A673 (cell line): ENCODE measurements at regions of chr16 and their contacts with region 1.

Region 1: DNA sequence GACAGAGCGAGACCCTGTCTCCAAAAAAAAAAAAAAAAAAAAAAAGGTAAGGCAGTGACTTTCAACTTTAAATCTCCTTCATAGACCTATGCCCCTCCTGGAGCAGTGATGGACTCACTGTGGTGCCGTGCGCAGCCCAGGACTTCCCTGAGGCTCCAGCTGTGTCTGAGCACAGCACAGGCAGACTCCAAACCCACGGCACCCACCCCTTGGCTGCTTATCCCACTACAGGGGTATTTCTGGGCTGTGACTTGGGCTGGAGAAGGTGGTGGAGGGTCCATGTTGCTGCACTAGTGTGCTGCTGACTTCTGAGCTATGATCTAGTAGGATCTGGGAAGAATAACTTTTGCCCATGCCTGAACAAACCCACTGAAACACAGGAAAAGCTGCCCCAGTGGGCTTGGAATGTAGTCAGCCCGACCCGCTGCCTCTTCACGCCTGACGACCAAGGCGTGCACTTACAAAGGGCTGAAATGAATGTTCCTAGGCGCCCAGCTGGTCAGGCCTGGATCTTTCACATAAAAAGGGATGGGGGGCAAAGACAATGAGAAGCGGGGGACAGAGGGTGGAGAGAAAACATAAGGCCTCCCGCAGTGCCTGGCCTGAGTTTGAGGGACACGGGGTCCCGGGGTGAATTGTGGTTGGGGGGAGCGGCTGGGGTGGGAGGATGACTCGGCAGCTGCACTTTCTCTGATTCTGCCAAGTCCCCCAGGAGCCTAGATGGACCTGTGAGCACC is 83.0 kb downstream of the IRF8 start:
- DNase-seq: no peak
- H3K4me3 ChIP-seq: no peak overlapping the region
- H3K27ac ChIP-seq: no peak overlapping the region
- H3K4me1 ChIP-seq: peaks cover 16% of the 10 kb centered on the region
- H3K27me3 ChIP-seq: peaks cover 7% of the 10 kb centered on the region
- CTCF ChIP-seq: no peak

Region 2: GRCh38 chr16:85715169-85716015 is 266.6 kb before region 1 on chr16:
- CTCF ChIA-PET with region 1: no interaction called
- POLR2A ChIA-PET with region 1: no interaction called
- intact Hi-C with region 1: no loop called
- DNase-seq: no peak
- H3K4me3 ChIP-seq: no peak overlapping the region
- H3K27ac ChIP-seq: peak overlapping the region; percentile 25
- H3K4me1 ChIP-seq: peaks cover 23% of the 10 kb centered on the region
- H3K27me3 ChIP-seq: no peaks in the 10 kb centered on the region
- CTCF ChIP-seq: no peak

Region 3: GRCh38 chr16:86285421-86285820 is 303.4 kb after region 1 on chr16:
- CTCF ChIA-PET with region 1: interaction called, 21 read pairs
- POLR2A ChIA-PET with region 1: no interaction called
- intact Hi-C with region 1: no loop called
- DNase-seq: no peak
- H3K4me3 ChIP-seq: no peak overlapping the region
- H3K27ac ChIP-seq: no peak overlapping the region
- H3K4me1 ChIP-seq: no peaks in the 10 kb centered on the region
- H3K27me3 ChIP-seq: peaks cover 92% of the 10 kb centered on the region
- CTCF ChIP-seq: no peak